Caco-2 (cell line): ENCODE measurements at regions of chr13 and their contacts with region 1.

Region 1: DNA sequence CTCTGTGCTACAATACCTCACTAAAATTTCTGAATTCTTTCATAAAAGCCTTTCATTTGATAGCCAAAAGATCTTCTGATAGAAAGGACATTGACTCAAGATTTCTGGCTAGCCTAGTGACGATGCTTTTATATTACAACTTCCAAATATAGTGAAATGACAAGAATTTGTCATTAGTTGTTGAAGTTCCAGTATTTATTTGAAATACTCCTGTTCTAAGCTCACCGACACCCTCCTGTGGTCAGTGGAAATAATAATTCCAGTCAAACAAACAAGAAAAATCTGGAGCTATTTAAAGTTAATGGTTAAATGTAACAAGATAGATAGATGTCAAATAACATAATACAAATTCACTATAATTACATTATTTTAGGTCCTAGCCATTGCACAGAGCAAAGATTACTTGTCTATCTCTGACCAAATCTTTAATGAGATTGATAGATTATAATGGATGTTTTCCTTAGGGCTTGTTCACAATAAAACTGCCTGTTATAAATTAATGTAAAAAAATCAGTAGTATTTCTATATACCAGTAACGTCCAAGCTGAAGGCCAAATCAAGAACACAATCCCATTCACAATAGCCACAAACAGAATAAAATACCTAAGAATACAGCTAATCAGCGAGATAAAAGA is 195.5 kb downstream of the RGCC start:
- DNase-seq: peak in 1 of 2 experiments; percentile 63
- H3K4me3 ChIP-seq: no peak overlapping the region
- H3K4me3 Mint-ChIP-seq: no peak overlapping the region
- H3K27ac Mint-ChIP-seq: peak overlapping the region; percentile 76
- H3K4me1 ChIP-seq: peaks cover 47% of the 10 kb centered on the region
- H3K4me1 Mint-ChIP-seq: peaks cover 27% of the 10 kb centered on the region
- H3K27me3 ChIP-seq: no peaks in the 10 kb centered on the region
- H3K27me3 Mint-ChIP-seq: no peaks in the 10 kb centered on the region
- CTCF ChIP-seq: peak; percentile 66 to 74

Region 2: DNA sequence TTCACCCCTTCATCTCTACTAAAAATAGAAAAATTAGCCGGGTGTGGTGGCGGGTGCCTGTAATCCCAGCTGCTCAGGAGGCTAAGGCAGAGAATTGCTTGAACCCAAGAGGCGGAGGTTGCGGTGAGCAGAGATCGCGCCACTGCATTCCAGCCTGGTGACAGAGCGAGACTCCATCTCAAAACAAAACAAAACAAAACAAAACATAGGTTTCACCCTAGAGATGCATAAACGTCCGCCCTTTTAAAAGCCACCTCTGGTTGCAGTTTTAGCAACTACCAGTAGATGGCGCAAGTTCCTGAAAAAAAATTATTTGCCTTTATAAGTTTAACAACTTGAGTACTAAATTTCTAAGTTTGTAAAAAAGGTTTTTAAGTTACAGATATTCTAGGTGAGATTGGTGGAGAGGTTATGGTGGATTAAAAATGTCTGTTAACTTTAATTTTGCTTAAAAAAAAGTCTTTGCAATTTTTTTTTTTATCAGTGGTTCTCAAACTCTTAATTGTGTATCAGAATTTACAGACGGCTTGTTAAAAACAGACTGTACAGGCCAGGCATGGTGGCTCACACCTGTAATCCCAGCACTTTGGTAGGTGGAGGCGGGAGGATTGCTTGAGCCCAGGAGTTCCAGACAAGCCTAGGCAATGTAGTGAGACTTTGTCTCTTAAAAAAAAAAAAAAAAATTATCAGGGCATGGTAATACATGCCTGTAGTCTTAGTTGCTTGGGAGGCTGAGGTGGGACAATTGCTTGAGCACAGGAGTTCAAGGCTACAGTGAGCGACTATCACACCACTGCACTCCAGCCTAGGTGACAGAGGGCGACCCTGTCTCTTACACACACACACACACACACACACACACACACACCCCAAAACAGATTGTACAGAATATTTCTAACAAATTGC is 299.7 kb before region 1 on chr13:
- CTCF ChIA-PET with region 1: no interaction called
- POLR2A ChIA-PET with region 1: no interaction called
- intact Hi-C with region 1: loop called (anchors 2 kb)
- DNase-seq: peak in 1 of 2 experiments; percentile 53
- H3K4me3 ChIP-seq: no peak overlapping the region
- H3K4me3 Mint-ChIP-seq: no peak overlapping the region
- H3K27ac Mint-ChIP-seq: peak overlapping the region; percentile 51
- H3K4me1 ChIP-seq: peaks cover 10% of the 10 kb centered on the region
- H3K4me1 Mint-ChIP-seq: peaks cover 13% of the 10 kb centered on the region
- H3K27me3 ChIP-seq: no peaks in the 10 kb centered on the region
- H3K27me3 Mint-ChIP-seq: no peaks in the 10 kb centered on the region
- CTCF ChIP-seq: peak; percentile 69 to 83

Region 3: GRCh38 chr13:41411522-41411921 is 241.3 kb before region 1 on chr13:
- CTCF ChIA-PET with region 1: interaction called, 28 read pairs
- POLR2A ChIA-PET with region 1: no interaction called
- intact Hi-C with region 1: loop called (anchors 1 kb)
- DNase-seq: peak; percentile 72 to 74
- H3K4me3 ChIP-seq: no peak overlapping the region
- H3K4me3 Mint-ChIP-seq: no peak overlapping the region
- H3K27ac Mint-ChIP-seq: no peak overlapping the region
- H3K4me1 ChIP-seq: 0 out of 2 replicates have a peak, but pooled peaks cover 4% of the 10 kb centered on the region
- H3K4me1 Mint-ChIP-seq: no peaks in the 10 kb centered on the region
- H3K27me3 ChIP-seq: no peaks in the 10 kb centered on the region
- H3K27me3 Mint-ChIP-seq: no peaks in the 10 kb centered on the region
- CTCF ChIP-seq: peak; percentile 48 to 52

Region 4: DNA sequence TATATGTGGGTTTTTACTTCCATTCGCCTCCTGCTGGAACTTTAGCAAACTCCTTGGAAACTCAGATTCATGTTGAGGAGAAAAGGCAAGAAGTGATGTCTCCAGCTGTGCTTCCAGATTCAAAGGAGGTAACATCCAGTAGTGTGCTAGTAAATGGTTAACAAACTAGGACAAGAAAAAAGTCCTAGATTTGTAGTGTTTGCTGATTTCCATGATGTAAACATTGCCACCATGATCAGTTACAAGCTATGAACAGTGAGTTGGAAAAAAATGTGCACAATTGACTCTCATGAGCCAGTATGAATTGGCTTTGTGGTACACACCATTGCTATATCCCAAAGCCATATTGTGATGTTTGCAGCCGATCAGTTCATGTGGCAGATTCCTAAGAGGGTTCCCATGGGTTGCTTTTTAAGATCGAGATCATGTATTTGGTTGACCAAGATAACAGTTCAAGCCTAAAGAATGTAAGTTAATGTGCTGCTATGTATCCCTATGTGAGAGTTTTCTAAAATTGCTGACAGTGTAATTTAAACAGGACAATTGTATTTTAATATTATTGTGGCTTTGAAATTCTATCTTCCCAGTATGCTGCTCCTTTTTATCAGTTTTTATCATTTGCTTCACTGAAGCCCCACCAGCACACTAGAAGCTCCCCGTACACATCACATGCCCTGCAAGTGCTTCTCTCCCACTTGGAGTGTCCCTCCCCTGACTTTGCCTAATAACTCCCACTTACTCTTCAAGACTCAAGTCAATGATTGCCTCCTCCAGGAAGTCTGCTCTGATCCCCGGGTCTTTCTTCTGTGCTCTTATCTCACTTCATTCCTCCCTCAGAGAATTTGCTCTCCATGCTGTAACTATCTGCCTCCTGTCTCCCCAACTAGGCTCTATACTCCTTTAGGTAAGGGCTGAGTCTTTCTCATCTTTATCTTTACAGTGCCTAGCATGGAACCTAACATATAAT is 47.2 kb before region 1 on chr13:
- CTCF ChIA-PET with region 1: interaction called, 9 read pairs
- POLR2A ChIA-PET with region 1: interaction called, 9 read pairs
- intact Hi-C with region 1: loop called (anchors 1 kb)
- DNase-seq: peak; percentile 41 to 62
- H3K4me3 ChIP-seq: no peak overlapping the region
- H3K4me3 Mint-ChIP-seq: peak overlapping the region; percentile 56
- H3K27ac Mint-ChIP-seq: peak overlapping the region; percentile 87
- H3K4me1 ChIP-seq: peaks cover 77% of the 10 kb centered on the region
- H3K4me1 Mint-ChIP-seq: peaks cover 53% of the 10 kb centered on the region
- H3K27me3 ChIP-seq: no peaks in the 10 kb centered on the region
- H3K27me3 Mint-ChIP-seq: no peaks in the 10 kb centered on the region
- CTCF ChIP-seq: no peak

Region 5: DNA sequence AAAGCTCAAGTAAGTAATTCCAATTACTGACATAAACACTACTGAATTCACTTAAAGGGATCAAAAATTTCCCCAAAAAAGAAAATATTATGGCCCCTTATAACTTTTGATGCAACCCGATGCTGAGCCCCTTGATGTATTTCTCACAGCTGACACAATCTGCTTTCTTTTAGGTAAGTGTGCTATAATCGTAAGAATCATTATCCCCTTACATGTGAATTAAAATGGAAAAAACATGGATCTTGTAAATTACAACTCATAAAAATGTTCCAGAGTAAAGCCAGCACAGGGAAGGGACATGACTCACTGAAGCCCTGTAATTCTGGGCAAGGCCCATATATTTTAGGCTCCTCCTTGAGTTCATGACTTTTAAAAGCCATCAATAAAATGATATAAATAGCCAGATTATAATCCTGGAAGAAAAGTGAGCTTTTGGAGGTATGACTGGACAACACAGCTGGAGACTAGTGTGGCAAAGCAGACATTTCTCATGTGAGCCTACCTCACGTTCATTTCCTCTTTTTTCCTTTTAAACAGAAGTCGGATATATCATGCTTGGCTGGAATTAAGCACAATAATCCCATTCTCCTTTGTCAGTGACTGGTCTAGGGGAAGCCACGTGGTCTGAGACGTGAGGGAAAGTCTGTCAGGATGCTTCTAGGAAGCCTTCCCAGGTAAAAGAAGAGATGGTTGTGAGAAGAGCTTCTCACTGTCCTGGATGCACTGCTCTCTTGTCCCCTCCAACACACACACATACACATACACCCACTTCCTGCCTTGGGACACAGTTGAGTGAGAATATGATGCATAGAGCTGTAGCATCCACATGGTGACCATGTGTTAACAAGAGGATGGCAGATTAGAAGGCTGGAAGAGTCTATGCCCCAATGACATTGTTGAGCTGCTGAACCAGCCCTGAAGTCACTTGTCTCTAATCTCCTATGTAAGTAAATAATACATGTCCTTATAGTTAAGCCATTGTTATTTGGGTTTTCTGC is 30.1 kb before region 1 on chr13:
- CTCF ChIA-PET with region 1: interaction called, 5 read pairs
- POLR2A ChIA-PET with region 1: no interaction called
- intact Hi-C with region 1: loop called (anchors 1 kb)
- DNase-seq: no peak
- H3K4me3 ChIP-seq: no peak overlapping the region
- H3K4me3 Mint-ChIP-seq: no peak overlapping the region
- H3K27ac Mint-ChIP-seq: peak overlapping the region; percentile 86
- H3K4me1 ChIP-seq: peaks cover 38% of the 10 kb centered on the region
- H3K4me1 Mint-ChIP-seq: peaks cover 48% of the 10 kb centered on the region
- H3K27me3 ChIP-seq: no peaks in the 10 kb centered on the region
- H3K27me3 Mint-ChIP-seq: no peaks in the 10 kb centered on the region
- CTCF ChIP-seq: no peak